Ascending aorta (tissue), 2 donors: ENCODE measurements at regions of chr19 and their contacts with region 1.

Region 1: GRCh38 chr19:15869109-15869555 is 28.7 kb downstream of the CYP4F2 start:
- DNase-seq: peak in 1 of 2 donors; percentile 52
- H3K4me3 ChIP-seq: no peak overlapping the region
- H3K27ac ChIP-seq: no peak overlapping the region
- H3K4me1 ChIP-seq: no peaks in the 10 kb centered on the region
- H3K27me3 ChIP-seq: no peaks in the 10 kb centered on the region
- CTCF ChIP-seq: peak; percentile 44 to 63 (median 52)

Region 2: GRCh38 chr19:15584541-15585115 is 284.5 kb before region 1 on chr19:
- intact Hi-C with region 1: no loop called
- DNase-seq: peak; percentile 14 to 83
- H3K4me3 ChIP-seq: no peak overlapping the region
- H3K27ac ChIP-seq: no peak overlapping the region
- H3K4me1 ChIP-seq: no peaks in the 10 kb centered on the region
- H3K27me3 ChIP-seq: peaks cover 5% of the 10 kb centered on the region
- CTCF ChIP-seq: peak; percentile 73 to 89 (median 80)

Region 3: GRCh38 chr19:15810335-15810734 is 58.8 kb before region 1 on chr19:
- intact Hi-C with region 1: loop called (anchors 5 kb)
- DNase-seq: no peak
- H3K4me3 ChIP-seq: no peak overlapping the region
- H3K27ac ChIP-seq: no peak overlapping the region
- H3K4me1 ChIP-seq: no peaks in the 10 kb centered on the region
- H3K27me3 ChIP-seq: no peaks in the 10 kb centered on the region
- CTCF ChIP-seq: peak in 1 of 3 experiments; percentile 36

Region 4: DNA sequence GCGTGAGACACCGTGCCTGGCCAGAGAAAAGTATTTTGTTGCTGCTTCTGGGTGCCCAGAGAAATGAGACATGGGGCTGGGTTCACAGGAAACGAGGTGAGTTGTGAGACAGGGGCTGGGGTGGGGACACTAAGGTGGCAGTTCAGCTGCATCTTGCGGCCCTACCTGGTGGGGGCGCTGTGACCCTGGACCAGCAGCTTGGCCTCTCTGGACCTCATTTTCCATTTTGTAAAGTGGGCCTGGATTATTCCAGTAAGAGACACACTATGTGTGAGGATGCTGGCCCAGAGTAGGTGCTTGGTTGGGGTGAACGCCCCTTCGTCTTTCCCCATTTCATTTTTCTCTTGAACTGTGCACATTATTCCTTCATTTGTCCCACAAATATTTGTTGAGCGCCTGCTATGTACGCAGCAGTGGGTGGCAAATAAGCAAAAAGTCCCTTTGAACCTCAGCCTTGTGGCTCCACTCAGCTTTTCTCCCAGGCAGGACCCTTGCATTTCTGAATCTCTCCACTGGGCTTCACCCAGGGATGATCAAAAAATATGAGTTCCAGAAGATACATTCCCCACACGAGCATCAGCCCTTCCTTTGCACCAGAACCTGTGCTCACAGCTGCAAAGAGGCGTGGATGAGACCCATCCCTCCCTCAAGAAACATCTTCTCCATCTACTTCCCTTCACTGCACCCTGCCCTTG is 27.1 kb before region 1 on chr19:
- intact Hi-C with region 1: no loop called
- DNase-seq: no peak
- H3K4me3 ChIP-seq: no peak overlapping the region
- H3K27ac ChIP-seq: no peak overlapping the region
- H3K4me1 ChIP-seq: no peaks in the 10 kb centered on the region
- H3K27me3 ChIP-seq: no peaks in the 10 kb centered on the region
- CTCF ChIP-seq: no peak

Region 5: GRCh38 chr19:15926484-15926883 is 57.4 kb after region 1 on chr19:
- intact Hi-C with region 1: no loop called
- DNase-seq: no peak
- H3K4me3 ChIP-seq: no peak overlapping the region
- H3K27ac ChIP-seq: no peak overlapping the region
- H3K4me1 ChIP-seq: no peaks in the 10 kb centered on the region
- H3K27me3 ChIP-seq: no peaks in the 10 kb centered on the region
- CTCF ChIP-seq: no peak

Region 6: DNA sequence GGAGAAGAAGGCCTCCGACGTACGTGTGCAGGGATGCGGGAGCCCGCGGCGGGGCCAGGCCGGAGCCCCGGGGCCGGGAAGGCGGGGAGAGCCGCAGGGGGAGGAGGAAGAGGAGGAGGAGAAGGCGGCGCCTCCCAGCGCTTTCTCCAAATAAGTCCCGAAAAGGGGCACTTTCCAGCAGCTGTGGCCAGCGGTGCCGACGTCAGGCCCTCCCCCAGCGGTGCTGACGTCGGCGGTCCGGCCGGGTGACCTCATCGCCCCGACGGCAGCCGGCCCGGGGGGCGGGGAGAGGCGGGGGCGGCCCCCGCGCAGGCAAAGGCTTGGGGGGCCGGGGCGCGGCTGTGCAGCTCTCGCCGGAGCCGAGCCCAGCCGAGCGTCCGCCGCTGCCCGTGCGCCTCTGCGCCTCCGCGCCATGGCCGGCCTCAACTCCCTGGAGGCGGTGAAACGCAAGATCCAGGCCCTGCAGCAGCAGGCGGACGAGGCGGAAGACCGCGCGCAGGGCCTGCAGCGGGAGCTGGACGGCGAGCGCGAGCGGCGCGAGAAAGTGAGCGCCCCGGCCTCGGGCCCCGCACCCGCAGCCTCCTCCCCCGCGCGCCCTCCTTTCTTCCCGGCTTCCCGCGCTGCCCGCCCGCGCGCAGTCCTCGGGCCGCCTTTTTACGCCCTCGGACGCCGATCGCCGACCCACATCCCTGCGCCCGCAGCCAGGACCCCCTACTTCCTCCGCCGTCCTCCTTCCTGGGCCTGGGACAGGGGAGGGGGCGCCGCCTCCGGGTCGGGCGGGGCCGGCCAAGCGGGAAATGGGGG is 207.2 kb after region 1 on chr19 and contains the start of gene TPM4:
- intact Hi-C with region 1: no loop called
- DNase-seq: peak; percentile 79 to 97
- H3K4me3 ChIP-seq: peak within 1 kb of the TSS; percentile 94 to 95
- H3K27ac ChIP-seq: peak within 1 kb of the TSS; percentile 99 to 100
- H3K4me1 ChIP-seq: peaks cover 14 to 43% of the 10 kb centered on the region in 2 donors
- H3K27me3 ChIP-seq: no peaks in the 10 kb centered on the region
- CTCF ChIP-seq: no peak
- total RNA-seq, gene TPM4: 619 TPM